Mucosa of descending colon (tissue), 3 donors: ENCODE measurements at regions of chr16 and their contacts with region 1.

Region 1: DNA sequence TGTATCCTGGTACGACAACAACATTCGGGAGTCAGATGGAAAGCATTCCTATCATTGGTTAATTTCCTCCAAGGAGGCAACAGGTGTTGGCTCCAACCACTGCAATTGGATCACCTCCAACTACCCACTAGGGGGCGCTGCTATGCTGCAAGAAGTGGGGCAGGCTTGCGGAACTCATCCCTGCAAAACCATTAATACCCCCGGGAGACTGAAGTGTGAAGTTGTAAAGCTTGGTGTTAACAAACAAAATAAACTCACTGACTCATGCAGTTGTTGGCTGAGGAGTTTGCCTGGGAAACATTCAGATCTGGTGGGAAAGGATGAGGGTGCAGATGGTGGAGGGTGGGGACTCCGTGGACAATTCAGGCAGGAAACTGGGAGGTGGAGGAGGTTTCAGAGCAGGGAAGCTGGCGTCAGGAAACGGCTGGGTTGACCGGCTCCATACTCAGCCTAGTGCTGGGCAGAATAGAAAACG is 84.9 kb downstream of the HS3ST2 start:
- DNase-seq: peak in 2 of 3 donors; percentile 73 to 81
- ATAC-seq: peak; percentile 96
- H3K4me3 ChIP-seq: no peak overlapping the region
- H3K4me1 ChIP-seq: no peaks in the 10 kb centered on the region
- CTCF ChIP-seq: peak; percentile 44

Region 2: GRCh38 chr16:22844416-22844815 is 54.5 kb before region 1 on chr16:
- intact Hi-C with region 1: no loop called
- DNase-seq: no peak
- ATAC-seq: no peak
- H3K4me3 ChIP-seq: no peak overlapping the region
- H3K4me1 ChIP-seq: no peaks in the 10 kb centered on the region
- CTCF ChIP-seq: no peak

Region 3: GRCh38 chr16:22955461-22956070 is 56.7 kb after region 1 on chr16:
- intact Hi-C with region 1: no loop called
- DNase-seq: no peak
- ATAC-seq: no peak
- H3K4me3 ChIP-seq: no peak overlapping the region
- H3K4me1 ChIP-seq: no peaks in the 10 kb centered on the region
- CTCF ChIP-seq: no peak

Region 4: GRCh38 chr16:23060458-23061320 is 161.8 kb after region 1 on chr16:
- intact Hi-C with region 1: loop called in 1 of 2 experiments (anchors 2 kb)
- DNase-seq: peak in 2 of 3 donors; percentile 49 to 88
- ATAC-seq: peak; percentile 93
- H3K4me3 ChIP-seq: no peak overlapping the region
- H3K4me1 ChIP-seq: no peaks in the 10 kb centered on the region
- CTCF ChIP-seq: peak; percentile 51